ENCODE measurements at regions of chr5 and their contacts with region 1.

Region 1: DNA sequence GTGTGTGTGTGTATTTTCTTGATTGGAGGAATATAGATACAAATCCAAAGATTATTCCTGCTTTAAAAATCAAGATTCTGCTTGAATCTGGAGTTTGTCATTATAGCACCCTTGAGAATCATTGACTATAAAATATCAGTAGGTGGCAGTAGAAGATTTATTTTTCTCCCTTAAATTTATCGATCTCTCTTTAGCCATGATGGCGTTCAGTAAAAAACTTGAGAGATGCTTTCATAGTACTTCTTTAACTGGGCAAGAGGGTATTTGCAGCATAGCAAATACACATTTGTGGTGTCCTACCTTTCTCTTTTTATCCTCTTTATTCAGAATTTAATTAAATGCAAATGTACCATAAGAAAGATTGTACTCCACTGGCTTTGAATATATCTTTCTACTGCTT is 307.7 kb downstream of the ADGRV1 start:
- DNase-seq: peak in 2 of 9 experiments; percentile 39 to 52
- ATAC-seq: no peak
- H3K4me3 ChIP-seq: no peak overlapping the region
- H3K4me3 Mint-ChIP-seq: no peak overlapping the region
- H3K27ac ChIP-seq: no peak overlapping the region
- H3K27ac Mint-ChIP-seq: no peak overlapping the region
- H3K4me1 ChIP-seq: peaks cover 4% of the 10 kb centered on the region
- H3K4me1 Mint-ChIP-seq: peaks cover 11% of the 10 kb centered on the region
- H3K27me3 ChIP-seq: no peaks in the 10 kb centered on the region
- H3K27me3 Mint-ChIP-seq: peaks cover 2% of the 10 kb centered on the region
- CTCF ChIP-seq: peak; percentile 49

Region 2: GRCh38 chr5:90932052-90932699 is 65.8 kb after region 1 on chr5:
- CTCF ChIA-PET with region 1: interaction called, 13 read pairs
- POLR2A ChIA-PET with region 1: no interaction called
- intact Hi-C with region 1: no loop called
- DNase-seq: peak in 5 of 9 experiments; percentile 9 to 63 (median 27)
- ATAC-seq: no peak
- H3K4me3 ChIP-seq: no peak overlapping the region
- H3K4me3 Mint-ChIP-seq: no peak overlapping the region
- H3K27ac ChIP-seq: no peak overlapping the region
- H3K27ac Mint-ChIP-seq: no peak overlapping the region
- H3K4me1 ChIP-seq: no peaks in the 10 kb centered on the region
- H3K4me1 Mint-ChIP-seq: peaks cover 4% of the 10 kb centered on the region
- H3K27me3 ChIP-seq: no peaks in the 10 kb centered on the region
- H3K27me3 Mint-ChIP-seq: peaks cover 12% of the 10 kb centered on the region
- CTCF ChIP-seq: peak; percentile 70

Region 3: DNA sequence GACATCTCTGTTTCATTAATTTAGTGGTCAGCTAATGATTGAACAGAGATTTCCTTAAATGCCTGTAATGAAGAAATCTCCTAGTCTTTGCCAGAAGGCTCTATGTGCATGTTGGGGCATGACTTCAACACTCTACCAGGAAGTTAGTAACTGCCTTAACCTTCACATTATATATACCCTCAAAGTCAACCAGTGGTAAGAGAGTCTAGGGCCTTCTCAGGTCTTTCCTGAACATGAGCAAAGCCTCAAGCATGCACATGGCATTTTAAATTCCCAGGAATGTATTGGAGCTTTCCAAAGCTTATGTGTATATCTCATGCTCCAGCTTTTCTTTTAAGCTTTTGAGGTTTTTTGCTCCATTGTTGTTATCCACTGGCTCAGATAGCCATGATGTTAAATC is 128.5 kb after region 1 on chr5:
- CTCF ChIA-PET with region 1: no interaction called
- POLR2A ChIA-PET with region 1: no interaction called
- intact Hi-C with region 1: no loop called
- DNase-seq: no peak
- ATAC-seq: no peak
- H3K4me3 ChIP-seq: no peak overlapping the region
- H3K4me3 Mint-ChIP-seq: no peak overlapping the region
- H3K27ac ChIP-seq: no peak overlapping the region
- H3K27ac Mint-ChIP-seq: no peak overlapping the region
- H3K4me1 ChIP-seq: no peaks in the 10 kb centered on the region
- H3K4me1 Mint-ChIP-seq: no peaks in the 10 kb centered on the region
- H3K27me3 ChIP-seq: no peaks in the 10 kb centered on the region
- H3K27me3 Mint-ChIP-seq: peaks cover 2% of the 10 kb centered on the region
- CTCF ChIP-seq: no peak

Region 4: GRCh38 chr5:91028499-91028956 is 162.2 kb after region 1 on chr5:
- CTCF ChIA-PET with region 1: no interaction called
- POLR2A ChIA-PET with region 1: no interaction called
- intact Hi-C with region 1: no loop called
- DNase-seq: no peak
- ATAC-seq: no peak
- H3K4me3 ChIP-seq: no peak overlapping the region
- H3K4me3 Mint-ChIP-seq: no peak overlapping the region
- H3K27ac ChIP-seq: no peak overlapping the region
- H3K27ac Mint-ChIP-seq: no peak overlapping the region
- H3K4me1 ChIP-seq: no peaks in the 10 kb centered on the region
- H3K4me1 Mint-ChIP-seq: no peaks in the 10 kb centered on the region
- H3K27me3 ChIP-seq: no peaks in the 10 kb centered on the region
- H3K27me3 Mint-ChIP-seq: peaks cover 4% of the 10 kb centered on the region
- CTCF ChIP-seq: no peak

Region 5: DNA sequence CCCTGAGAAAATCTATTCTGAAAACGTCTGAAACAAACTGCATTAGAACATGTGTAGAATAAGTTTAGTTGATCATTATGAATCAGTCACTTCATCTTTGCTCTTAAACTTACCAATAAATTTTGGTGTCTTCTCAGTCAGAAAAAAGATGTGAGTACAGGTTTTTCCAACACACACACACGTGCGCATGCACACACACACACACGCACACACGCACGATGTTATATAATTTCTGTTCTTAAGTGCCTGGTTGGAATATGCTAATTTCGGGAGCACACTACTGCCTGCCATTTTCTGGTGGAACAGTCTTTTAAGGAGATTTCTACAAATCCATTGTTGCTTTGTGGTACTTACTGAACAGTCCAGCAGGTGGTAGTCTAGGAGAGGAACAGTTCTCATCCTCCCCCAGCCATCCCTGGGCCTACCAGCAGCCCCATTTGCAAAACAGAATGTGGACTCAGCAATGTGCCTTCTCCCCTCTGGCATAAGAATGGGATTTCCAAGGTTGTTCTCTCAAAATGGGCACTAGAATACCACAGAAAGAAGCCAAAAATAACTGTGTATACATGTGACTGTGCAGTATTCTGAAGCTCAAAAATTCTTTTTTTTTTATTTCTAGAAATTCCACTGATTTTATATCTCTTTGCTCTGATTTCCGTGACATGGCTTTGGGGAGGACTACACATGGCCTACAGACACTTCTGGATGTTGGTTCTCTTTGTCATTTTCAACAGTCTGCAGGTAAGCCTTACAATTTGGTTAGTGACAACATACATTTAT is 235.5 kb after region 1 on chr5:
- CTCF ChIA-PET with region 1: no interaction called
- POLR2A ChIA-PET with region 1: no interaction called
- intact Hi-C with region 1: loop called (anchors 5 kb)
- DNase-seq: peak in 8 of 9 experiments; percentile 14 to 71 (median 46)
- ATAC-seq: peak; percentile 84
- H3K4me3 ChIP-seq: no peak overlapping the region
- H3K4me3 Mint-ChIP-seq: no peak overlapping the region
- H3K27ac ChIP-seq: no peak overlapping the region
- H3K27ac Mint-ChIP-seq: no peak overlapping the region
- H3K4me1 ChIP-seq: no peaks in the 10 kb centered on the region
- H3K4me1 Mint-ChIP-seq: no peaks in the 10 kb centered on the region
- H3K27me3 ChIP-seq: no peaks in the 10 kb centered on the region
- H3K27me3 Mint-ChIP-seq: no peaks in the 10 kb centered on the region
- CTCF ChIP-seq: no peak

Region 6: GRCh38 chr5:91280362-91281269 is 414.3 kb after region 1 on chr5:
- CTCF ChIA-PET with region 1: no interaction called
- POLR2A ChIA-PET with region 1: no interaction called
- intact Hi-C with region 1: no loop called
- DNase-seq: peak; percentile 53 to 95 (median 85)
- ATAC-seq: peak; percentile 84
- H3K4me3 ChIP-seq: peak overlapping the region; percentile 58 to 79
- H3K4me3 Mint-ChIP-seq: peak overlapping the region; percentile 84
- H3K27ac ChIP-seq: peak overlapping the region; percentile 16 to 28
- H3K27ac Mint-ChIP-seq: peak overlapping the region; percentile 84
- H3K4me1 ChIP-seq: peaks cover 8% of the 10 kb centered on the region
- H3K4me1 Mint-ChIP-seq: peaks cover 26% of the 10 kb centered on the region
- H3K27me3 ChIP-seq: no peaks in the 10 kb centered on the region
- H3K27me3 Mint-ChIP-seq: no peaks in the 10 kb centered on the region
- CTCF ChIP-seq: no peak

Measured in CD8-positive, alpha-beta T cell (primary cell).